GM10248 (cell line): ENCODE measurements at regions of chr14 and their contacts with region 1.

Region 1: GRCh38 chr14:20682435-20683124 is 1.8 kb upstream of the RNASE4 start:
- DNase-seq: peak; percentile 84
- CTCF ChIP-seq: no peak

Region 2: DNA sequence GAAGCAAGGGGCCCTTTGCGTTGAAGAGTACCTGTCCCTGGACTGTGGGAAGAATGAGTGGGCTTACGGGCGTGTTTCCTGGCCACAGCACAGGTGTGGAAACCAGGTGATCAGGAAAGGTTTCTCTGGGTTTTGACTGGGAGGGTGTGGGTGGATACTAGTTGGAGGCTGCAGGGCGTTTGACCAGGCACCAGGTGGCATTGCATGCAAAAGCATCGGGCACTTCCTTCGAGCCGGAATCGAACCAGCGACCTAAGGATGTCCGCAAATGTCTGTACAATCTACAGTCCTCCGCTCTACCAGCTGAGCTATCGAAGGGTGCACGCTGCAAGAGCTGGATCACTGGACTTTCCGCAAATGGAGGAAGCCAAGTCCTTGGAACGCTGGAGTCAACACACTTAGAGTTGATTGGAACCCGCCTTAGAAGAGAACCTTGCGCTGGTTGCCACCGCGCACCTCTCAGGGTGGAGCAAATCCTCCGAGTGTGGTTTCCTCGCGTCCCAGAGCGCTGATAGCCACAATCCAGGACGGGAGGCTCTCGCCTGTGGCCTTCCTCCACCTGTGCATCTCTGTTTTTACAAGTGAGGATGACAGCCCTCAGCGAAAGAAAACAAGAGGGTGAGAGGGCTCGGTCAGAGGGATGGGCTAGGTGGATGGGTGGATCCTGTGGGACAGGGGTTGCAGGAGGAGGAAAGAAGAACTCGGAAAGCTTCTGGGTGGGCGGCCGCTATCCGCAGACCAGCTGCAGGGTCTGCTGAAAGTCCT is 19.4 kb before region 1 on chr14:
- CTCF ChIA-PET with region 1: interaction called, 199 read pairs
- POLR2A ChIA-PET with region 1: interaction called, 16 read pairs
- DNase-seq: peak; percentile 55
- CTCF ChIP-seq: peak; percentile 59